CD8-positive, alpha-beta T cell (primary cell): ENCODE measurements at regions of chr12 and their contacts with region 1.

Region 1: DNA sequence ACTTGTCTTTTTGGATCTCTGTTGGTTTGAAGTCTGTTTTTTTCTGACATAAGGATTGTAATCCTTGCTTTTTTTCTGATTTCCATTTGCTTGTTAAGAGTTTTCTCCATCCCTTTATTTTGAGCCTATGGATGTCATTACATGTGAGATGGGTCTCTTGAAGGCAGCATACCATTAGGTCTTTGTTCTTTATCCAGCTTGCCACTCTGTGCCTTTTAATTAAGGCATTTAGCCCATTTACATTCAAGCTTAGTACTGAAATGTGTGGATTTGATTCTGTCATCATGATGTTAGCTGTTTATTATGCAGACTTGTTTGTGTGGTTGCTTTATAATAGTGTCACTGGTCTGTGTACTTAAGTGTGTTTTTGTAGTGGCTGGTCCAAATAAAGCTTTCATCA is 100.0 kb downstream of the CCDC91 start:
- DNase-seq: peak in 1 of 9 experiments; percentile 6
- ATAC-seq: no peak
- H3K4me3 ChIP-seq: no peak overlapping the region
- H3K4me3 Mint-ChIP-seq: no peak overlapping the region
- H3K27ac ChIP-seq: no peak overlapping the region
- H3K27ac Mint-ChIP-seq: no peak overlapping the region
- H3K4me1 ChIP-seq: no peaks in the 10 kb centered on the region
- H3K4me1 Mint-ChIP-seq: peaks cover 13% of the 10 kb centered on the region
- H3K27me3 ChIP-seq: no peaks in the 10 kb centered on the region
- H3K27me3 Mint-ChIP-seq: no peaks in the 10 kb centered on the region
- CTCF ChIP-seq: no peak

Region 2: DNA sequence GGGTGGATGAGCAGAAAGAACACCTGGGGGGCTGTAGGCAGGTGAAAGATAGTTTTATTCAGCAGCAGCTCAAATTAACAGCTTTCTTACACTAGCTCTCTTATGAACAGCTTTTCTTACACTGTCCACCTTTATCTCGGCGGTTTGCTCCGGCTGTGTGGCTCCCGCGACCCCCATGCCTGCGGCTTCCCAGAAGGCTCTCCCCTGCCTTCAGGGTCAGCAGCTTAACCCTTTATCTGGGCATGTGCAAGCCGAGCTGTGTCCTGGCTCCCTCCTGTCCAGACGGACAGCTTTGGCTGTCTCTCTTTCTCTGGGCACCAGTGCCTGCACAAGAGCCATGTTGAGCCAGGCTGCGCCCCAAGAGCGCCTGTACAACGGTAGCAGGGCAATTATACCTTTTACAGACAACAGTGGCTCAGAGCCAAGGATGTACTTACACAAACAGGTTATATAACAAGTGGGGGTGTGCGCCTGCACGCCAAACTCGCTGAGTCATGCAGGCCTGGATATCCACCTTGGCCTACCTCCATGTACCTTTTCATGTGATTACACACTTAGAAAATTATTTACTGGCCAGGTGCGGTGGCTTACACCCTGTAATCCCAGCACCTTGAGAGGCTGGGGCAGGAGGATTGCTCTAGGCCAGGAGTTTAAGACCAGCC is 538.7 kb before region 1 on chr12:
- CTCF ChIA-PET with region 1: no interaction called
- POLR2A ChIA-PET with region 1: no interaction called
- intact Hi-C with region 1: no loop called
- DNase-seq: peak in 1 of 9 experiments; percentile 14
- ATAC-seq: no peak
- H3K4me3 ChIP-seq: no peak overlapping the region
- H3K4me3 Mint-ChIP-seq: no peak overlapping the region
- H3K27ac ChIP-seq: no peak overlapping the region
- H3K27ac Mint-ChIP-seq: no peak overlapping the region
- H3K4me1 ChIP-seq: no peaks in the 10 kb centered on the region
- H3K4me1 Mint-ChIP-seq: peaks cover 8% of the 10 kb centered on the region
- H3K27me3 ChIP-seq: no peaks in the 10 kb centered on the region
- H3K27me3 Mint-ChIP-seq: no peaks in the 10 kb centered on the region
- CTCF ChIP-seq: no peak

Region 3: DNA sequence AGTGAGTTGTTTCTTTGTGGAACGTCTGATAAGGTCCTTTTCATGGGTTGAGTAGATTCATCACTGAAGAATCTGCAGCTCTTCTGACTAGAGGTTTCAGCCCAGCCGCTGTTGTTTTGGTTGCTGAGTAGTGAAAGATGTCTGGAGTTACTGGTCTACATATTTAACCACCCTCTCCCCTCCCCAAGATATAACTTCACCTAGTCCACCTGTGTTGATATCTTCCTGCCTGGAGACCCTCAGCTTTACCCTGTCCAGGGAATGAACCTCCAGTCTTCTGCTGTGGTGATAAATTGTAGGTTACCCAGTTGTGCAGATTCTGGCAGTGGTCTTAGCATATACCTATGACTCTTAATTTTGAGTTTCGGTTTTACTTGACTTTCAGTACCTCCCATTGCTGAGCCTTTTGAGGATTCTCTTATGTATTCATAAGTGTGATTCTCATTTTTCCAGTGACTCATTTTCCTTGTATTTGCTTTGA is 37.1 kb before region 1 on chr12:
- CTCF ChIA-PET with region 1: no interaction called
- POLR2A ChIA-PET with region 1: no interaction called
- intact Hi-C with region 1: no loop called
- DNase-seq: peak in 2 of 9 experiments; percentile 40 to 67
- ATAC-seq: peak; percentile 79
- H3K4me3 ChIP-seq: peak overlapping the region in 1 of 2 experiments; percentile 23
- H3K4me3 Mint-ChIP-seq: peak overlapping the region; percentile 66
- H3K27ac ChIP-seq: peak overlapping the region in 1 of 2 experiments; percentile 38
- H3K27ac Mint-ChIP-seq: peak overlapping the region; percentile 37
- H3K4me1 ChIP-seq: peaks cover 31% of the 10 kb centered on the region
- H3K4me1 Mint-ChIP-seq: peaks cover 59% of the 10 kb centered on the region
- H3K27me3 ChIP-seq: no peaks in the 10 kb centered on the region
- H3K27me3 Mint-ChIP-seq: no peaks in the 10 kb centered on the region
- CTCF ChIP-seq: no peak

Region 4: DNA sequence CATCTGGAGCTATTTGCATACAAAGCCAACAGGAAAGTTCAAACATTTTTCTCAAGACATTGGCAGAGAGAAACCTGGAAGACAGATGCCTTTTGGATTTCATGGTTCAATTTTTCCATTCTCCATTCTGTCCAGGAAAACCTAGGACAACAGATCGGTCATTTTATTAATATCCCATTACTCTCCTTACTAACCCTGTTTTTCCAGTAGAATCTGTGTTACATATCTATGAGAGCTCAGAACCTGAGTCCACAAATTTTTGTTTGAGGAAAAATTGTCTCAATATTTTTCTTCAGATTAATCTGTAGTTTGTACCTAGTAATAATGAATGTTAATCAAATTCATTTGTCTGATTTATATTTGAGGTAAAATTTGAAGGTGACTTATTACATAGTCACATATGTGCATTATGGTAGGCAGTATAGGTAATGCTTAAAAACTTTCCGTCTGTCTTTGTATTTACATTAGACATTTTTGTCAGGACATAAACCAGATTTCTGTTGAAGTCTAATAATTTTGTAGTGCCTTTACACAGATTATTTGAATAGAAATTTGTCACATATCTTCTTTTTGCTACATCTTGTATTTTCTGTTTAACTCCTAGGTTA is 24.7 kb before region 1 on chr12:
- CTCF ChIA-PET with region 1: no interaction called
- POLR2A ChIA-PET with region 1: no interaction called
- intact Hi-C with region 1: loop called in 1 of 2 experiments (anchors 2 kb)
- DNase-seq: no peak
- ATAC-seq: no peak
- H3K4me3 ChIP-seq: no peak overlapping the region
- H3K4me3 Mint-ChIP-seq: no peak overlapping the region
- H3K27ac ChIP-seq: no peak overlapping the region
- H3K27ac Mint-ChIP-seq: no peak overlapping the region
- H3K4me1 ChIP-seq: no peaks in the 10 kb centered on the region
- H3K4me1 Mint-ChIP-seq: peaks cover 3% of the 10 kb centered on the region
- H3K27me3 ChIP-seq: no peaks in the 10 kb centered on the region
- H3K27me3 Mint-ChIP-seq: no peaks in the 10 kb centered on the region
- CTCF ChIP-seq: no peak

Region 5: GRCh38 chr12:28313631-28314030 is 23.4 kb after region 1 on chr12:
- CTCF ChIA-PET with region 1: no interaction called
- POLR2A ChIA-PET with region 1: no interaction called
- intact Hi-C with region 1: no loop called
- DNase-seq: no peak
- ATAC-seq: no peak
- H3K4me3 ChIP-seq: no peak overlapping the region
- H3K4me3 Mint-ChIP-seq: no peak overlapping the region
- H3K27ac ChIP-seq: no peak overlapping the region
- H3K27ac Mint-ChIP-seq: no peak overlapping the region
- H3K4me1 ChIP-seq: no peaks in the 10 kb centered on the region
- H3K4me1 Mint-ChIP-seq: peaks cover 2% of the 10 kb centered on the region
- H3K27me3 ChIP-seq: no peaks in the 10 kb centered on the region
- H3K27me3 Mint-ChIP-seq: no peaks in the 10 kb centered on the region
- CTCF ChIP-seq: no peak